ENCODE measurements at regions of chr3 and their contacts with region 1.

Region 1: GRCh38 chr3:98994128-98994762 is 92.8 kb upstream of the DCBLD2 start:
- DNase-seq: no peak
- ATAC-seq: peak; percentile 53
- H3K4me3 Mint-ChIP-seq: no peak overlapping the region
- H3K27ac Mint-ChIP-seq: no peak overlapping the region; the same call in 1 of the 2 replicates
- H3K4me1 Mint-ChIP-seq: no peaks in the 10 kb centered on the region
- H3K27me3 Mint-ChIP-seq: no peaks in the 10 kb centered on the region; the same call in 1 of the 2 replicates
- CTCF ChIP-seq: no peak; the same call in 1 of the 2 replicates

Region 2: DNA sequence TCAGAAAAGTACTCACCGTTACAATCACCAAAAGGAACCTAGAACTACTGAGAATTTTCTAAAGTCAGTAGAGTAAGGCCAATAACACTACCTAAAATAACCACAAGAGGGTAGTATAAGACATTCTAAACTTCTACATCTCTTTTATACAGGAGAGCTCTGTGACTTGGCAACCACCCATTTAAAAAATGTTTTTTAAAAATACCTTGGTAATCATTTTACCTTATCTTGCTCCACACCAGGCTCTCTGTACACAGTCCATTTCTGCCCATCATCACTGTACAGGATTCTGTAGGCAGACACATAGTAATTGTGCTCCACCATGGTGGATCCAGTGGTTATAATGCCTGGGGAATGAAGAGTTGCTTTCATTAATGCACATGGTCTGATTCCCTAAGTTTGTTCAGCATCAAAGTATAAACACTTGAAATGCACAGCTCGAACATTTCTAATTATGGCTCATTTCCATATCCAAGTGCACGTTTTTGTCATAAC is 176.7 kb before region 1 on chr3:
- CTCF ChIA-PET with region 1: interaction called, 75 read pairs
- POLR2A ChIA-PET with region 1: no interaction called
- DNase-seq: no peak
- ATAC-seq: peak; percentile 77
- H3K4me3 Mint-ChIP-seq: no peak overlapping the region
- H3K27ac Mint-ChIP-seq: no peak overlapping the region; the same call in 1 of the 2 replicates
- H3K4me1 Mint-ChIP-seq: peaks cover 14% of the 10 kb centered on the region
- H3K27me3 Mint-ChIP-seq: no peaks in the 10 kb centered on the region
- CTCF ChIP-seq: peak; percentile 70

Region 3: DNA sequence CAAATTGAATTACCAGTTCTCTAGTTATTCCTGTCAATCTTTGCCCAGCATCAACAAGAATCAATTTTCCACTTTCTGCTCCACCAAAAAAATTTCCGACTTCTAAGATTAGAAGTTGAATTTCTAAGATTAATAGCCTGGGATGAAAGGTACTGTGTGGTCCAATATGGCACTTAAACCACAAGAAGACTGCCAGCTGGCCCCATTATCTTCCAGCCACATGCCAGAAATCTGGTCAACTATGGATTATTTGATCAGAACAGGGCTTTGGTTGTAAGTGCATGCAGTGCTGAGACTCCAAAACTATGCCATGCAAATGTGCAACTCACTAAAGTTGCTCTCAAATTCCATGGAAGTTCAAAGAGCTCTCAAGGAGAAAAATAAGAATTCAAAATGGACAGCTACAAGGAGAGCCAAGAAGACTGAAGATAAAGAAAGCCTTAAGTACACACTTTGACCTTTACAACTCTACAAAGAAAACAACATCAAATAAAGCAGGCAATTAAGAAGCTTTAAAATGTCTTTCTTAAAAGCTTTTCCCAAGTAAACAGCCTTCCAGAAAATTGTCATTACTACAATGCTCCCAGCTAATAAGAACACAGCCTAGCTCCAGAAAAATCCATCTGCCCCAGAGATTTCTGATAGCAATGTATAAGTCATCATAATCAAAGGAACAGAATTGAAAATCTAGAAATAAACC is 166.9 kb before region 1 on chr3:
- CTCF ChIA-PET with region 1: interaction called, 13 read pairs
- POLR2A ChIA-PET with region 1: no interaction called
- DNase-seq: no peak
- ATAC-seq: no peak
- H3K4me3 Mint-ChIP-seq: no peak overlapping the region
- H3K27ac Mint-ChIP-seq: no peak overlapping the region
- H3K4me1 Mint-ChIP-seq: peaks cover 5% of the 10 kb centered on the region
- H3K27me3 Mint-ChIP-seq: peaks cover 4% of the 10 kb centered on the region; the same call in 1 of the 2 replicates
- CTCF ChIP-seq: no peak

Region 4: GRCh38 chr3:98901392-98902350 is 92.6 kb before region 1 on chr3 and contains the start of gene DCBLD2:
- CTCF ChIA-PET with region 1: interaction called, 10 read pairs
- POLR2A ChIA-PET with region 1: no interaction called
- DNase-seq: peak; percentile 98
- ATAC-seq: peak; percentile 96
- H3K4me3 Mint-ChIP-seq: peak within 1 kb of the TSS; percentile 97
- H3K27ac Mint-ChIP-seq: peak within 1 kb of the TSS; percentile 96
- H3K4me1 Mint-ChIP-seq: peaks cover 35% of the 10 kb centered on the region
- H3K27me3 Mint-ChIP-seq: no peaks in the 10 kb centered on the region
- CTCF ChIP-seq: no peak
- total RNA-seq, gene DCBLD2: 44.5 to 47.9 TPM (median 46.5 TPM) in 3 replicates

Region 5: GRCh38 chr3:99114565-99115291 is 120.5 kb after region 1 on chr3:
- CTCF ChIA-PET with region 1: no interaction called
- POLR2A ChIA-PET with region 1: no interaction called
- DNase-seq: peak; percentile 60
- ATAC-seq: peak; percentile 99
- H3K4me3 Mint-ChIP-seq: no peak overlapping the region
- H3K27ac Mint-ChIP-seq: no peak overlapping the region
- H3K4me1 Mint-ChIP-seq: no peaks in the 10 kb centered on the region
- H3K27me3 Mint-ChIP-seq: no peaks in the 10 kb centered on the region
- CTCF ChIP-seq: peak; percentile 49

Measured in WTC11 (cell line).